B cell (primary cell): ENCODE measurements at regions of chr13 and their contacts with region 1.

Region 1: GRCh38 chr13:48769107-48769704 is 115.5 kb downstream of the CYSLTR2 start:
- DNase-seq: peak; percentile 87
- ATAC-seq: peak; percentile 100
- H3K4me3 ChIP-seq: no peak overlapping the region
- H3K4me3 Mint-ChIP-seq: no peak overlapping the region
- H3K27ac ChIP-seq: no peak overlapping the region
- H3K27ac Mint-ChIP-seq: no peak overlapping the region
- H3K4me1 ChIP-seq: peaks cover 0 to 2% of the 10 kb centered on the region in 2 donors
- H3K4me1 Mint-ChIP-seq: peaks cover 2% of the 10 kb centered on the region
- H3K27me3 ChIP-seq: no peaks in the 10 kb centered on the region
- H3K27me3 Mint-ChIP-seq: peaks cover 40% of the 10 kb centered on the region
- CTCF ChIP-seq: peak; percentile 99

Region 2: DNA sequence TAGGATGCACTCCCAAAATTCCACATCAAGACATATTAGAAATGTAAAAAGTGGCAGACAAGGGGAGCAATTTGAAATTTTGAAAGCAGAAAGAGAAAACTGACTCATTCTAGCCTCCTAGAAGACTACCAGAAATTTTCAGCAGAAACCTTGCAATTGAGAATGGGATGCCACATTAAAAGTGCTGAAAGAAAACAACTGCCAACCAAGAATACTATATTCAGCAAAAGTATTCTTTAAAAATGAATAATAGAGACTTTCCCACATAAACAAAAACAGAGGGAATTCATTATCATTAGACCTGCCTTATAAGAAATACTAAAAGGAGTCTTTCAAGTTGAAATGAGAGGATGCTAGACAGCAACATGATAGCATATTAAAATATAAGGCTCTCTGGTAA is 1794.0 kb before region 1 on chr13:
- CTCF ChIA-PET with region 1: interaction called, 4 read pairs
- POLR2A ChIA-PET with region 1: no interaction called
- intact Hi-C with region 1: loop called (anchors 10 kb)
- DNase-seq: no peak
- ATAC-seq: no peak
- H3K4me3 ChIP-seq: no peak overlapping the region
- H3K4me3 Mint-ChIP-seq: no peak overlapping the region
- H3K27ac ChIP-seq: no peak overlapping the region
- H3K27ac Mint-ChIP-seq: no peak overlapping the region
- H3K4me1 ChIP-seq: no peaks in the 10 kb centered on the region
- H3K4me1 Mint-ChIP-seq: peaks cover 6% of the 10 kb centered on the region
- H3K27me3 ChIP-seq: no peaks in the 10 kb centered on the region
- H3K27me3 Mint-ChIP-seq: no peaks in the 10 kb centered on the region
- CTCF ChIP-seq: no peak

Region 3: DNA sequence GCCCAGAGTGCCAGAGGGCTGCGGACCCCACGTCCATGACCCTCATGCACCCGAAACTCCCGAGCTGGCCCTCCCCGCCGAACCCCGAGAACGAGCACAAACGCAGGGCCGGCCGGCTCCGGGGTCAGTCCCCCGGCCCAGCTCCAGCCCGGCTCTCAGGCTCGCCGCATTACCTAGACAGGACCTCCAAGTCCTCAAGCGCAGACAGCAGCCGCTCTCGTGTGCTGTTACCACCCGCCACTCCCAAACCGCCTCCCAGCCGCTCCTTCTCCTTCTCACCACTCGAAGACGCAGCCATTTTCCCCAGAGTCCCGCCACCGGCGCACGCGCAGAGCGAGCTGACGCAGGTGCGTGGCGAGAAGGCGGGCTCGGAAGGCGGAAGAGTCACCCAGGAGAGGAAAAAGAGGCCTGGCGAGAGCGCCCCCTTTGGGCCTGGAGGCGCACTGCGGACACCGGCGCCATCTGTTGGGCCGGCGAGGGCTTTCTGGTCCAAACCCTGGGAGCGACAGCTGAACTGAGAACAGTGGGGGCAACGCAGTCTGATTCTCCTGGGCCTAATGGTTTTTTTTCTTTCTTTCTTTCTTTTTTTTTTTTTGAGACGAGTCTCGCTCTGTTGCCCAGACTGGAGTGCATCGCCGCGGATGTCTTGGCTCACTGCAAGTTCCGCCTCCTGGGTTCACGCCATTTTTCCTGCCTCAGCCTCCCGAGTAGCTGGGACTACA is 674.3 kb before region 1 on chr13 and contains the start of gene MED4:
- CTCF ChIA-PET with region 1: interaction called, 12 read pairs
- POLR2A ChIA-PET with region 1: no interaction called
- intact Hi-C with region 1: no loop called
- DNase-seq: peak; percentile 97
- ATAC-seq: peak; percentile 99
- H3K4me3 ChIP-seq: peak within 1 kb of the TSS; percentile 86 to 99 (median 92)
- H3K4me3 Mint-ChIP-seq: peak within 1 kb of the TSS; percentile 94
- H3K27ac ChIP-seq: peak within 1 kb of the TSS; percentile 83 to 89
- H3K27ac Mint-ChIP-seq: peak within 1 kb of the TSS; percentile 95
- H3K4me1 ChIP-seq: peaks cover 16 to 17% of the 10 kb centered on the region in 2 donors
- H3K4me1 Mint-ChIP-seq: peaks cover 35% of the 10 kb centered on the region
- H3K27me3 ChIP-seq: no peaks in the 10 kb centered on the region
- H3K27me3 Mint-ChIP-seq: peaks cover 10% of the 10 kb centered on the region
- CTCF ChIP-seq: peak; percentile 99
- total RNA-seq, gene MED4: 49.7 and 50.1 TPM in 2 replicates

Region 4: GRCh38 chr13:48222358-48223301 is 546.6 kb before region 1 on chr13:
- CTCF ChIA-PET with region 1: no interaction called
- POLR2A ChIA-PET with region 1: no interaction called
- intact Hi-C with region 1: no loop called
- DNase-seq: no peak
- ATAC-seq: no peak
- H3K4me3 ChIP-seq: no peak overlapping the region
- H3K4me3 Mint-ChIP-seq: peak overlapping the region; percentile 44
- H3K27ac ChIP-seq: no peak overlapping the region
- H3K27ac Mint-ChIP-seq: no peak overlapping the region
- H3K4me1 ChIP-seq: peaks cover 30 to 32% of the 10 kb centered on the region in 2 donors
- H3K4me1 Mint-ChIP-seq: peaks cover 35% of the 10 kb centered on the region
- H3K27me3 ChIP-seq: peaks cover 0 to under 1% (median 0%) of the 10 kb centered on the region in 4 experiments
- H3K27me3 Mint-ChIP-seq: peaks cover under 1% of the 10 kb centered on the region
- CTCF ChIP-seq: no peak

Region 5: DNA sequence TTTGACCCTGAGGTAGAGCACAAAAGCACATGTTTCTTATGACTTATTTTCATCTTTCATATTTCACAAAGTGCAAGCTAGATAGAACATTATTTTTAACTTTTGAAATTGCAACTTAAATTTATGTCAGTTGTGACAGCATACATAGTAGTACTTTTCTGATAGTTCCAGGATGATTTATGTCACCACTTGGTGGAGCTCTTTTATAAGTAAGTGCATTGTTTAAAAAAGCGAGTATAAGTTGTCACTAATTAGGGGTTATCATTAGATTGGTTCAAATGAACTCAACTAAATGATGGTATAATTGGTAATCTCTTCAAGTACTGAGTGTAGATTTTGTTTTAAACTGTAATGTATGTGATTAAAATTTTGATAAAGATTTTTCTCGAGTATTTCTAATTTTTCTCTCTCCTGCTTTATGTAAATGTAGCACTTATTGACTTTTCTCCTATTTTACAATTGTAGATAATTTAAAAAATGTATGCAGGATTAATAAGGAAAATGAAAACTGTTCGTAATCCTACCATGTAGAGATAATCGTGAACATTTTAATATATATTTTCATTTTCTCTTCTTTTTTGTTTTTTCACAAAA is 434.6 kb before region 1 on chr13:
- CTCF ChIA-PET with region 1: interaction called, 67 read pairs
- POLR2A ChIA-PET with region 1: no interaction called
- intact Hi-C with region 1: loop called (anchors 1 kb)
- DNase-seq: peak; percentile 63
- ATAC-seq: peak; percentile 33
- H3K4me3 ChIP-seq: no peak overlapping the region
- H3K4me3 Mint-ChIP-seq: no peak overlapping the region
- H3K27ac ChIP-seq: no peak overlapping the region
- H3K27ac Mint-ChIP-seq: no peak overlapping the region
- H3K4me1 ChIP-seq: no peaks in the 10 kb centered on the region
- H3K4me1 Mint-ChIP-seq: peaks cover 12% of the 10 kb centered on the region
- H3K27me3 ChIP-seq: no peaks in the 10 kb centered on the region
- H3K27me3 Mint-ChIP-seq: no peaks in the 10 kb centered on the region
- CTCF ChIP-seq: peak; percentile 82

Region 6: DNA sequence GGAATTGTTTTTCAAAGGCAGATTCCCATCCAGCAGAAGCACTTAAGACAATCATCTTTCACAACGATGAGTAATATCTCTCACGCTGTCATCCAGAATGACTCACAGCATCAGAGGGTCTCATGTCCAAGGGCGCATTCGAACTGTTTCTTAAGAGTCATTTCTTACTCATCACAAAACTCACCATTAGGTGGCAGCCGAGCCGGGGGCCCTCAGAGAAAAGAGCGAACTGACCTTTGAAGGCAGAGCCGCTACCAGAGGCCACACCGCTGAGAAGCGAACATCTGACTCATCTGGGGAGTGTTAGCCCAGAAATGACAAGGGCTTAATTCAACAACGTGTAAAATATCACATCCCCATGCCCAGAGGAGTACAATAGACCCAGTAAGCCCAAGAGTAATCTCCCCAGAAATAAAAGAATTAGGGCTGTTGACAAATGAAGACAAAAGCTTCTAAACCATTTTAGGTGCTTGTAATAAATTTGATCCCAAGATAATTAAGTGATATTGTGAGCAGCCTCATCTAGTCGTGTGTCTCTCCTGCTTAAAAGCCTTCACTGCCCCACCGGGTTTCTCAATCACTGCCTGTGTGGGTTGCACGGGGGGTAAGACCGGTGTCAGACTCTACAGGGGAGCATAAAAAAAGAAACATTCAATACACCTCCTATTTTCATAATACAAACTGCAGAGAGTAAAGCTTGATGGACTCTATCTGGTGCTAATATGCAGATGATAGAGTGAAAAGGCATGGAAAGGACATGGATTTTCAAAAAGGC is 19.3 kb before region 1 on chr13:
- CTCF ChIA-PET with region 1: interaction called, 12 read pairs
- POLR2A ChIA-PET with region 1: no interaction called
- intact Hi-C with region 1: no loop called
- DNase-seq: peak; percentile 23
- ATAC-seq: peak; percentile 58
- H3K4me3 ChIP-seq: no peak overlapping the region
- H3K4me3 Mint-ChIP-seq: no peak overlapping the region
- H3K27ac ChIP-seq: no peak overlapping the region
- H3K27ac Mint-ChIP-seq: no peak overlapping the region
- H3K4me1 ChIP-seq: no peaks in the 10 kb centered on the region
- H3K4me1 Mint-ChIP-seq: peaks cover 6% of the 10 kb centered on the region
- H3K27me3 ChIP-seq: peaks cover 0 to 2% (median 0%) of the 10 kb centered on the region in 4 experiments
- H3K27me3 Mint-ChIP-seq: peaks cover 8% of the 10 kb centered on the region
- CTCF ChIP-seq: peak; percentile 48